ENCODE measurements at regions of chr1 and their contacts with region 1.

Region 1: DNA sequence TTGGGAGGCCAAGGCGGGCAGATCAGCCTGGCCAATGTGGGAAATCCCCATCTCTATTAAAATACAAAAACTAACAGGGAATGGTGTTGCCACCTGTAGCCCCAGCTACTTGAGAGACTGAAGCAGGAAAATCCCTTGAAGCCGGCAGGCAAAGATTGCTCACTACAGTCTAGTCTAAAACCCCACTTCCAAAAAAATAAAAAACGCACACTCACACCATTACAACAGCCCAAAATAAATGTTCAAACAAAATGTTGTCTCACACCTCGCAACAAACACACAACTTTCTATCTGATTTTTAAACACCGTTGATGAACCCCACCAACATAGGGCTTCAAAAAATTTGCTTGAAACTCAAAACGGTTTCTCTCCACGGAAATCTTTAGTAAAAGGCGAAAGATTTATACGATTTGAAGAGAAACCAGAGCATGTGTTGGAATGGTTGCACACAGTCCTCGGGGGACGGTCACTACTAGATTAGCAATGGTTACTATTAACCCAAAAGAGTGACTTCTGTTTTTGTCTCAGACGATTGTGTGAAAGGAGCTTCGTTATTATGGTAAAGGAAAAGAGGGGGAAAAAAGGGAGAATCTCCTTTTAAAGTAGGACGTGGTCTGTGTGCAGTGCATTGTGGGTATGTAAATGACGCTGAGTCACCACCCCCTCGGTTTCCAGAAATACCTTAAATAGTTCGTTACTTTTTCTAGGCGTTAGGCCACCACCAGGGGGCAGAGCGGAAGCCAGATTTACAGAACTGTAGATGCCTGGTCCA is at the start of gene RNU5D-1:
- DNase-seq: peak; percentile 94
- H3K4me3 ChIP-seq: peak within 1 kb of the TSS; percentile 17; the same call in 1 of the 2 replicates
- H3K27ac ChIP-seq: peak within 1 kb of the TSS; percentile 98
- H3K27me3 ChIP-seq: no peaks in the 10 kb centered on the region
- CTCF ChIP-seq: peak; percentile 82
- polyA plus RNA-seq, gene RNU5D-1: not detected in 2 replicates

Region 2: DNA sequence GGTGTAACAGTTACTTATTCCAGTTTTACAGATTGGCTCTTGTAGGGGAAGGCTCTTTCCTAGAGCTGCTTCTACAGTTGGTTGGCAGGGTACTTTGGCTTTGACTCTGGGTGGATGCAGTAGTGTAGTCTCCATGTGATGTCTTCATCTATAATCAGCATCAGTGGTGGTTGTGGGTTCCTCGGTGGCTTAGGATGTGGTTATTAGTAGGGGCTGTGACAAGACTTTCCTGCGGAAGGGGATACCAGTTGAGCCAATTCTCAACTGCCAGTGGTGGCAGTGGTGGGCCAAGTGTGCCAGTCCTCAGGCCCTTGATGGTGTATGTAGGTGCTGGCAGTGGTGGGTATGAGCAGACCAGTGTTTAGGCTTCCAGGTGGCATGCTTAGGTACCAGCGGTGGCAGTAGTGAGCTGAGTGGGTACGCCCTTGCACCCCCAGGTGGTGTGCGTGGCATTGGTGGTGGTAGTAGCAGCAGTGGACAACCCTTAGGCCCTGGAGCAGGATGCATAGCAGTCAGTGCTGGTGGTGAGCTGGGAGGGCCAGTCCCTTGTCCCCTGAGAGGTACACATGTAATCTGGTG is 562.3 kb before region 1 on chr1:
- CTCF ChIA-PET with region 1: no interaction called
- POLR2A ChIA-PET with region 1: no interaction called
- DNase-seq: no peak
- H3K4me3 ChIP-seq: no peak overlapping the region
- H3K27ac ChIP-seq: no peak overlapping the region
- H3K27me3 ChIP-seq: peaks cover 9% of the 10 kb centered on the region
- CTCF ChIP-seq: no peak

Region 3: DNA sequence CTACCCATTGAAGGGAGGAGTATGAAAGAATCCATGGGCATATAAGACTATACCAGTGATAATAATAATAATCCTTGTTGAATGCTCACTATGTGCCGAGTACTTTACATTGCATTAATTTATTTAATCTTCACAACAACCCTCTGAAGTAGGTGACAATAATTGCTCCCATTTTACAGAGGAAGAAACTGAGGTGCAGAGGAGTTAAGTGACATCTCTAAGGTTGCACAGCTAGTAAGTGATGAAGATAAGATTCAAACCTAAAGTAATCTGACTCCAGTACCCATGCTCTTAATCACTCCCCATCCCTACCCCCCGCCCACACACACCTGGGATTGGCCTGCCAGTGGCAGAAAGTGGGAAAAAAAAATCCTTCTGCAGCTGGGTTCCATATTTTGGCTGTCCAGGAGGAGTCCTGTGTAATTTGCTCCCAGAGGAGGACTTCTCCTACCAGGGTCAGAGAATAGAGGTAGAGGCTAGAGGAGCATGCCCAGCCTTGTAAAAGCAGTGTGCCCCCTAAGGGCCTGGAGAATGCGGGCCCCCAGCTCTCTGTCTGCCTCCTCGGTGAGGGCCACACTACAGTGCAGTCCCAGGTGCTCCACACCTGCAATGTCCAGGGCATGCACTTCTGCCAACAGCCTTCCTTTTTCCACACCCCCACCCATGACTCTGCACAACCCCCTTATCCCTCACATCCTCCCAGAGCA is 114.5 kb before region 1 on chr1:
- CTCF ChIA-PET with region 1: no interaction called
- POLR2A ChIA-PET with region 1: no interaction called
- DNase-seq: no peak
- H3K4me3 ChIP-seq: peak overlapping the region; percentile 42
- H3K27ac ChIP-seq: no peak overlapping the region
- H3K27me3 ChIP-seq: peaks cover 15% of the 10 kb centered on the region
- CTCF ChIP-seq: no peak

Region 4: DNA sequence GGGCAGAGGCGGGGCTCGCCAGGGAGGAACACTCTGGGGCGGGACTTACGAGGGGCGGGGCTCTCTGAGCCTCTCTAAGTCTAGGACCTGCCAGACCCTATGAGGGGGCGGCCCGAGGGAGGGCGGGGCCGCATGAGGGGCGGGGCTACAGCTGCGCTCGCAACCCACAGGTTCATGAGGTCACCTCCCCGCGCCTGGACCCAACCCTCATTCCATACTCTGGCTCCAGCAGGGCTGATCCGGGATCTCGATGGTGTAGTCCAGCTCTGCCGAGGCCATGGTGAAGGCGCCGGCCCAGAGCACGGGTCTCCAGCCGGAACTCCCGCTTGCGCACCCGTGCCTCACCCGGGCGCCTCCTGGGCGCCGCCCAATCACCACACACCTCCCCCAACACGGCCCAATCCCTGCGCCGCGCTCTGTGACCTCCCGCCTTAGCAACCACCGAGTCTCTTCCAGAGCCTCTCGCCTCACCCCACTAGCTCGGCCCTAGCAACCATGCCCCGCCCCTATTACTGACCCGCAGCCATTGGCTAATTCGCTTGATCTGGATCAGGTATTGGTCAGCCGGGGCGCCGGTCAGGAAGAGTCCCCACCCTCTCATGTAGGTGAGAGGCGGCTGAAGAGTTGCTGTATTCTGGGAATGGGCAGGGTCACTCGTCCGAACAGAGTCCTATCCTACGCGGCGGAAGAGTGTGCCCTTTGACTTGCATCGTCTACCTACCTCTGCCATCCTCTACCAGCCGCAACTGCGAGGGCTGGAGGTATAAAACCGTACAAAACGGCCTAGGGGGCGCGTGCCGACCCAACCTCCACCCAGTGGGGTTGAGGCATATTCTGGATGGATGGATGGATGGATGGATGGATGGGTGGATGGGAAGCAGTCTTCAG is 56.6 kb before region 1 on chr1 and contains the starts of genes ARMH1 and TMEM53:
- CTCF ChIA-PET with region 1: interaction called, 11 read pairs
- POLR2A ChIA-PET with region 1: interaction called, 8 read pairs
- DNase-seq: peak; percentile 97
- H3K4me3 ChIP-seq: peak within 1 kb of the TSS; percentile 91
- H3K27ac ChIP-seq: peak within 1 kb of the TSS; percentile 92
- H3K27me3 ChIP-seq: no peaks in the 10 kb centered on the region
- CTCF ChIP-seq: no peak
- polyA plus RNA-seq, gene ARMH1: 2.7 and 3.4 TPM in 2 replicates
- polyA plus RNA-seq, gene TMEM53: 4.4 and 6.1 TPM in 2 replicates

Region 5: DNA sequence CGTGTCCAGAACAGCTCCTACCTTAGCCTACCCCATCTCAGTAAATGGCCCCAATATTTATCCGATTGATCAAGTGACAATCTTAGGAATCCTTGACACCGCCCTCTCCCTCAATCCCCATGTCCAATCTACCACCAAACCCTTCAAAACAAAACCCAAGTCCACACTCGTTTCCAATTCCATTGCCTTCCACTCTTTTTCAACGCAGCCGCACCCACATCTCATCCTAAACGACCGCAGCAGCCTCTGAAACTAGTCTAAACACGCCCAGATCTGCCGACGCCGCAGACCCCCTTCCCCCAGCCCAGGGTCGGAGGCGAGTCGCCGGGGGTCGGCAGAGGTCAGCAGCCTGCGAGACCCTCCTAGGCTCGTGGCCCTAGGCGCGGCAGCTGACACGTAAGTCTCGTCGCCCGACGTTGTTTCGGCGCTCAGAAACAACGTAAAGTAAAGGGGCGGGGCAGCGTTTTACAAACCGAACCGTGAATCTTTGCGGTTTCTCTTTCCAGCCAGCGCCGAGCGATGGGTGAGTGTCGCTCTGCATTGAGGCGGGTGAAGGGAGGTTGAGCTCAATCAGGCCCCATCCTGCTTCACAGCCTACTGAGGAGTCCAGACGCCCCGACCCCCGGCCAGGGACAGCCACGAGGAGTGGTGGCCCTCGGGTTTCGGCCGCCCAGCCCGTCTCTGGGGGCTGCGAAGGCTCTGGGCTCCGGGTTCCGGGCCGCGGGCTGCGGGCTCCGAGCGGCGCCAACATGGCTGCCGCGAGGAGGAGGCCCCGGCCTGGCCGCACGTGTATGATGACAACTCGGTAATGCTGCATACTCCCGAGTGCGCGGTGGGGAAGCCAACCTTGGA is 44.4 kb after region 1 on chr1 and contains the start of gene RPS8:
- CTCF ChIA-PET with region 1: interaction called, 9 read pairs
- POLR2A ChIA-PET with region 1: interaction called, 16 read pairs
- DNase-seq: peak; percentile 76
- H3K4me3 ChIP-seq: peak within 1 kb of the TSS; percentile 92
- H3K27ac ChIP-seq: peak within 1 kb of the TSS; percentile 96
- H3K27me3 ChIP-seq: no peaks in the 10 kb centered on the region
- CTCF ChIP-seq: no peak
- polyA plus RNA-seq, gene RPS8: 2,661 and 2,755 TPM in 2 replicates

Region 6: GRCh38 chr1:44799770-44800584 is 69.0 kb after region 1 on chr1 and contains the start of gene PLK3:
- CTCF ChIA-PET with region 1: interaction called, 3 read pairs
- POLR2A ChIA-PET with region 1: interaction called, 15 read pairs
- DNase-seq: peak; percentile 95
- H3K4me3 ChIP-seq: peak within 1 kb of the TSS; percentile 85
- H3K27ac ChIP-seq: peak within 1 kb of the TSS; percentile 92
- H3K27me3 ChIP-seq: no peaks in the 10 kb centered on the region
- CTCF ChIP-seq: peak; percentile 93
- polyA plus RNA-seq, gene PLK3: 14.2 and 20.1 TPM in 2 replicates